ENCODE measurements at regions of chr16 and their contacts with region 1.

Region 1: GRCh38 chr16:53219795-53220454 is 165.1 kb downstream of the CHD9 start:
- DNase-seq: no peak
- H3K4me3 Mint-ChIP-seq: no peak overlapping the region
- H3K27ac Mint-ChIP-seq: no peak overlapping the region
- H3K4me1 Mint-ChIP-seq: no peaks in the 10 kb centered on the region
- H3K27me3 Mint-ChIP-seq: no peaks in the 10 kb centered on the region

Region 2: GRCh38 chr16:53031323-53031942 is 188.5 kb before region 1 on chr16:
- CTCF ChIA-PET with region 1: no interaction called
- POLR2A ChIA-PET with region 1: no interaction called
- intact Hi-C with region 1: no loop called
- DNase-seq: no peak
- H3K4me3 Mint-ChIP-seq: no peak overlapping the region
- H3K27ac Mint-ChIP-seq: no peak overlapping the region
- H3K4me1 Mint-ChIP-seq: no peaks in the 10 kb centered on the region
- H3K27me3 Mint-ChIP-seq: peaks cover 24% of the 10 kb centered on the region

Region 3: GRCh38 chr16:53235851-53236250 is 15.9 kb after region 1 on chr16:
- CTCF ChIA-PET with region 1: no interaction called
- POLR2A ChIA-PET with region 1: no interaction called
- intact Hi-C with region 1: loop called (anchors 1 kb)
- DNase-seq: no peak
- H3K4me3 Mint-ChIP-seq: no peak overlapping the region
- H3K27ac Mint-ChIP-seq: no peak overlapping the region
- H3K4me1 Mint-ChIP-seq: no peaks in the 10 kb centered on the region
- H3K27me3 Mint-ChIP-seq: no peaks in the 10 kb centered on the region